Activated naive CD4-positive, alpha-beta T cell treated with anti-CD3 and anti-CD28 coated beads for 36 hours (primary cell): ENCODE measurements at regions of chr10 and their contacts with region 1.

Region 1: DNA sequence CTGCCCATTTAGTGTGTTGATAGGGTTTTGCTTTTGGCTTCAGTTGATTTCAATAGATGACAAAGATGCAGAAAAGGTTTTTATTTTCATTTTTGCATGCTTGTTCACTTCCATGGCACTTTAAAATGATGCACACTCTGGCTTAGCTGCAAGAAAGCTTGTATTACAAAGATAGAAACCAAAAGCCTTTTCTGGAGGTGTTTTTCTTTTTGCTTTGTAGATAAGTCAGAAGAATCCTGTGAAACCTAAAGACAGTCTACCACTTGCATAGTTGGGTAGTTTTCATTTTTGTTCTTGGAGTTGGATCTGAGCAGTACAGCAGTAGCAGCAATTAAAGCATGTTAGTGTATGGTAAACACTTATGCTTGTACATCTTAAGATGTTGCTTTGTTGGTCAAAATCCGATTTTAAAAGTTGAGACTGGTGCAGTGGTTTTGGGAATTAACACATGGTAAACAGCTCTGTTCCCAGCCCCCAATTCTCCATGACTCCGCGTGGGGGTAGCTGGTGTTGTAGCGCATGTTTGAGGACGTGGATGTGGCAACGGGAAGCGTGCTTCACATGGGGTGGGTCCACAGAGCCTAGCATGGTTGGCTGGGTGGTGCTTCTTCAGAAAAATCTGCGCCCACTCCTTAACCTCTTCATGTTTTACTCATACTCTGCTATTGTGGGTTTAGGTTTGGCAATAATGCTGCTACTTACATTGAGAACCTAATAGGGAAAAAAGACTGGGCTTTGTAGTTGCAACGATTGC is 19.8 kb downstream of the CCNY start:
- DNase-seq: peak; percentile 31
- H3K4me3 Mint-ChIP-seq: peak overlapping the region; percentile 8
- H3K27ac Mint-ChIP-seq: peak overlapping the region; percentile 68
- H3K4me1 Mint-ChIP-seq: peaks cover 71% of the 10 kb centered on the region
- H3K27me3 Mint-ChIP-seq: no peaks in the 10 kb centered on the region

Region 2: GRCh38 chr10:34001087-34001580 is 1355.0 kb before region 1 on chr10:
- CTCF ChIA-PET with region 1: no interaction called
- intact Hi-C with region 1: no loop called
- DNase-seq: no peak
- H3K4me3 Mint-ChIP-seq: no peak overlapping the region
- H3K27ac Mint-ChIP-seq: no peak overlapping the region
- H3K4me1 Mint-ChIP-seq: no peaks in the 10 kb centered on the region
- H3K27me3 Mint-ChIP-seq: no peaks in the 10 kb centered on the region

Region 3: DNA sequence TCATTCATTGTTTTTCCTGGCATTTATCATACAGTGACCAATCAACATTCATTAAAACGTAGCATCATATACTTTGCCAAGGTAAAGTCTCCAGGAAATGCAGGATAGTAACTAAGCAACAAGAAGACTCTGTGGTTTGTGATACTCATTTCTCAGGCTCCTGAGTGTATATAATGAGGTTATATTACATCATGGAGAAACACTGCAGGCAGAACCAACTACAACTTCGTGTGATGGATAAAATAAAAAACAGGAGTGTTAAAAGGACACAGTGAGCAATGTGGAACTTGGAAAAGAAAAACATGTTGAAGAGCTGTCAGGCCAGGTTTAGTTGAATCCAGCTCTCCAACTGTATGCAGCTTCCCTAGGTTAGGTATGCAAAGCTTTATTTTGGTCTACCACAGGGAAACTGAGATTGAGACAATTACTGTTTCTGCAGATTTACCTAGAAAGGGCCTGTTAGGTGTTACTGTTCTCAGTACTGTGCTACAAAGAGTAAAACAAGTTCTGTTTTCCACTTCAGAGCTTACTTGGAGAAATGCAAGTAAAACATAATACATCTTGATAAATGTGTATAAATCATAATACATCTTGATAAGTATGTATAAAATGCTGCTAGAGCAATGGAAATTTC is 27.6 kb before region 1 on chr10:
- CTCF ChIA-PET with region 1: interaction called, 3 read pairs
- intact Hi-C with region 1: loop called (anchors 1 kb)
- DNase-seq: no peak
- H3K4me3 Mint-ChIP-seq: no peak overlapping the region
- H3K27ac Mint-ChIP-seq: peak overlapping the region; percentile 26
- H3K4me1 Mint-ChIP-seq: peaks cover 46% of the 10 kb centered on the region
- H3K27me3 Mint-ChIP-seq: no peaks in the 10 kb centered on the region

Region 4: DNA sequence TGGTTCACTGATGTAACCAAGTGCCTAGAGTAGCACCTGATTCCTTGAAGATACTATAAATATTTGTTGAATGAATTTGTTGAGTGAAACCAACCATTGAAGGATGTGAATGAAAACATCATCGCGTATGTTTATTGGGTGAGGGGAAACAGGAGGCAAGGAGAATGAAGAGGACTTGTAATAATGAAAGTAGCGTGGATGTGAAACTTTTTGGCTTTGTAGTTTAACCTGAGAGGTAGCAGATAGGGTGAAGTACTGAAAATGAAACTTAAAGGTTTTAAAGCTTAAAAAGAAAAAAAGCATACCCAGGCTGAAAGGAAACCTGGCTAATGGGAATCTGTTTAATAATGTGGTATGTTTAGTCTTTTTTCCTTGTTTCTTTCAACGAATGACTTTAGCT is 14.6 kb before region 1 on chr10:
- CTCF ChIA-PET with region 1: interaction called, 3 read pairs
- intact Hi-C with region 1: loop called (anchors 1 kb)
- DNase-seq: no peak
- H3K4me3 Mint-ChIP-seq: no peak overlapping the region
- H3K27ac Mint-ChIP-seq: peak overlapping the region; percentile 11
- H3K4me1 Mint-ChIP-seq: peaks cover 74% of the 10 kb centered on the region
- H3K27me3 Mint-ChIP-seq: no peaks in the 10 kb centered on the region

Region 5: DNA sequence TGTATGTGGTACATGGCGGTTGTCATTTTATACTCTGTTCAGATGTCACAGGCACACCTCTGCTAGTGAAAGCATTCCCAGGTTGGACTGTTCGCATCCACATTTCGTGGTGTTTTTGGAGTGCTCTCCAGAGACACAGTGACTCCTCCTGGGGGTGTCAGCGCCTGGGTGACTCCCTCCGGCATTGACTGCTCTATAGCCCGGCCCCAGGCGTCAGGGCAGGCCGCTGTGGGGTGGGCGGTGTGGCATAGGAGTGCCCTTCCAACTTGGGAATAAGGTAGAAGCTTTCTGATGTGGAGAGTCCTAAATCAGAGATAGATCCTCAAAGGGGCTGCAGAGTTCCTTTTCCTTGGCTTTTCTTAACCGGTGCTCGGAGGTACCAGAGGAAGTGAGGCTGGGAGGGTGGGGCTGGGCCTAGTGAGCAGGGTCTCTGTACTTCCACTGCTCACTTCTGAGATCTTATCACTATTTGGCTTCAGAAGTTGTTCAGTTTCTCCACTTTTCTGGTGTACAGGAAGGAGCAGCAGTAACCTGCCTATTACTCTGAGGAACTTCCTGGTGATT is 12.4 kb after region 1 on chr10:
- CTCF ChIA-PET with region 1: no interaction called
- intact Hi-C with region 1: loop called (anchors 1 kb)
- DNase-seq: no peak
- H3K4me3 Mint-ChIP-seq: no peak overlapping the region
- H3K27ac Mint-ChIP-seq: no peak overlapping the region
- H3K4me1 Mint-ChIP-seq: peaks cover 69% of the 10 kb centered on the region
- H3K27me3 Mint-ChIP-seq: no peaks in the 10 kb centered on the region

Region 6: DNA sequence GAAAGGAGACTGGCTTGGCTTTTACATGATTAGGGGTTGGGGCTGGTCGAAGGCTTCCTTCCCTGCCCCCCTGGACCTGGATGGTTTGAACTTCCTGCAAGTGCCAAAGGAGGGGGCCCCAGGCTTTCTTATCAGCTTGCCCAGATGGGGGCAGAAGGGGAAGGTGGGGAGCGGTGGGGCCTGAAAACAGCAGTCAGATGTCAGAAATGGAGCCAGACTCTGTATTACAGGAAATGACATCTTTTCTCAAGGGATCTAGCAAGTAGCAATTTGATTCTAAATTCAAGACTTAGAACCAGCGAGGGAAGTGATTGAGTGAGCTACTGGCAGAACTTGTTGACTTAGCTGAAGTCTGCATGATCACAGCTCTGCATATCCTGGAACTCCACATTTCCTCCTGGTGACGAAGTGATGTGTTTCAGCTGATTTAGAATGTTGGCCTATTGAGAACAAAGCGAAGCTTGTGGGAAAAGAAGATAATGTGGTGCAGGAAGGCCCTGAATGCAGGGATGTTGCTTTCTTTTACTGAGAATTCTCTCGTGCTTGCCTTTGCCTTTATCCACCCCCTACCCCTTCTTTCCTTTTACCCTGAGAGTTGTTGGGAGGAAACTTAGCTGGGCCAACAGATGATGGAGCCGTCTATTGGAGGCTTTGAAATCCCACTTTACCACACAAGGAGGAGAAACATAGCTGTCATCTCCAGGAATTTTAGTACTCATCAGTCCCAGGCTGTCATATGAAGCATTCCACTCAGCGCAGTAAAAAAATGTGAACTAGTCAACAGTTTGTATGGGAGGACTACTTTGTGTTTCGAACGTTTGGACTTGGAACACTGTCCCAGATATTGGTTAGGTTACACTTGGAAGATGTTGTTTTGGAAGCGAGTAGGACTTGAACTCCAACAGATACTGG is 23.3 kb after region 1 on chr10:
- CTCF ChIA-PET with region 1: interaction called, 3 read pairs
- intact Hi-C with region 1: loop called (anchors 1 kb)
- DNase-seq: peak; percentile 59
- H3K4me3 Mint-ChIP-seq: peak overlapping the region; percentile 59
- H3K27ac Mint-ChIP-seq: peak overlapping the region; percentile 84
- H3K4me1 Mint-ChIP-seq: peaks cover 69% of the 10 kb centered on the region
- H3K27me3 Mint-ChIP-seq: no peaks in the 10 kb centered on the region

Region 7: GRCh38 chr10:35398355-35398754 is 42.2 kb after region 1 on chr10:
- CTCF ChIA-PET with region 1: no interaction called
- intact Hi-C with region 1: no loop called
- DNase-seq: no peak
- H3K4me3 Mint-ChIP-seq: no peak overlapping the region
- H3K27ac Mint-ChIP-seq: no peak overlapping the region
- H3K4me1 Mint-ChIP-seq: peaks cover 38% of the 10 kb centered on the region
- H3K27me3 Mint-ChIP-seq: no peaks in the 10 kb centered on the region

Region 8: DNA sequence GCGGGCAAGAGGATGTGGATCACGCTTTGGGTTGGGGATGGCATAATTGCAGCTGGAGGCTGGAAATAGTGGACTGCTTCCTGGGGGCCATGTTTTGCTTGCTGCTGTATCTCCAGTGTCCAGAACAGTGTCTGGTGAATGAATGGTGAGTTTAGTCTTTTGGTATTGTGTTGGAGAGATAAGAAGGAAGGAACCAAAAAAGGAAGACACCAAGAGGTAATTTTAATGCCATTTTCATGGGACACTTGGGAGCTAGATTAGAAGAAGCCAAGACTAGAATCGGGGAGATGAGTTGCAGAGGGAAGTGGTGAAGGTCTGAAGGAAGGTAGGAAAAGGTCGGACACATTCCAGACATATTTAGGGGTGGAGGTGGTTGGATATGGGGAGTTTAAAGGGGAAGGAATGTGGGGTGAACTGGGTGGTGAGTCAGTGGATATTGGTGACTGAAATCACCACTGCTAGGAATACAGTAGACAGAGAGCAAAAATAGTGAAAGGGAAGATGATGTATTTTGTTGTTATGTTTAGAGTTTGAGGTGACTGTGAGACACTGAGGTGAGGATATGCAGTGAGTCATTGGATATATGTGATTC is 56.8 kb after region 1 on chr10:
- CTCF ChIA-PET with region 1: no interaction called
- intact Hi-C with region 1: loop called (anchors 5 kb)
- DNase-seq: no peak
- H3K4me3 Mint-ChIP-seq: no peak overlapping the region
- H3K27ac Mint-ChIP-seq: no peak overlapping the region
- H3K4me1 Mint-ChIP-seq: peaks cover 41% of the 10 kb centered on the region
- H3K27me3 Mint-ChIP-seq: no peaks in the 10 kb centered on the region

Region 9: GRCh38 chr10:35442028-35442427 is 85.9 kb after region 1 on chr10:
- CTCF ChIA-PET with region 1: no interaction called
- intact Hi-C with region 1: loop called (anchors 1 kb)
- DNase-seq: peak; percentile 36
- H3K4me3 Mint-ChIP-seq: no peak overlapping the region
- H3K27ac Mint-ChIP-seq: peak overlapping the region; percentile 78
- H3K4me1 Mint-ChIP-seq: peaks cover 47% of the 10 kb centered on the region
- H3K27me3 Mint-ChIP-seq: no peaks in the 10 kb centered on the region